MCF 10A (cell line): ENCODE measurements at regions of chr16 and their contacts with region 1.

Region 1: GRCh38 chr16:31117391-31118197 is at the start of gene KAT8:
- DNase-seq: peak; percentile 99
- H3K4me3 Mint-ChIP-seq: peak within 1 kb of the TSS; percentile 74
- H3K27ac Mint-ChIP-seq: peak within 1 kb of the TSS; percentile 94
- H3K4me1 Mint-ChIP-seq: peaks cover 16% of the 10 kb centered on the region
- H3K27me3 Mint-ChIP-seq: no peaks in the 10 kb centered on the region
- CTCF ChIP-seq: no peak
- total RNA-seq, gene KAT8: 42.0 and 45.8 TPM in 2 replicates

Region 2: DNA sequence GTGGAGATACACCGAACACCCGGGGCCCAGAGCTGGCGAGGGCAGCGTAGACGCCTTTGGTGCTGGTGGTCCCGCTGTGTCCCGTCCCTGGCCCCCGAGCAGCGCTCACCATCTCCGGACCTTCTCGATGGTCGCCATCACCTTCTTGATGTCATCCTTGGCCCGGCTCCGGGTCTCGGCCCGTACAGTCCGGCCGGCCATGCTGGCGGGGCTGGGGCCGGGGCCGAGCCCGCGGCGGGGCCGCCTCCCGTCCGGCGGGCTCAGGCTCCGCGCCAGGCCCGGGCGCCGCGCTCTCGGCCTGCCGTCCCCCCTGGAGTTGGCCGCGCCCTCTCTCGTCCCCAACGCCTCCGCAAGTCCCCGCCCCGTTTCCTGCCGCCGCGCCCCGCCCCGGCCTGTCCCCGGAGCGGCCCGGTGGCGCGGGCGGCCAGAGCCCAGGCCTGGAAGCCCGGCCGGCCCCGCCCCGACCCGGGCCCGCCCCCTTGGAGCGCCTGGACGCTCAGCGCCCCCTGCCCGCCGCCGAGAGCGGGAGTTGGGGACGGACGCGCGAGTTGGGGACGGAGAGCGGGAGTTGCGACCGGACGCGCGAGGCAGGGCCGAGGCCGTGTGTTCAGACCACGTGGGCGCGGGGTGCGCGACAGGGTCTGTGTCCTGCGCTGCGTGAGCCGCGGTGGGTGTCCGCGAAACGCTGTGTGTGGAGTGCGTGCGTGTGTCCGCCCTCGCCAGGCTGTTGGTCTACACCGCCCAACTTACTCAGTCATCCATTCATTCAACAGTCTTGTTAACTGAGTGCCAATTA is 223.7 kb before region 1 on chr16 and contains the start of gene BCL7C:
- CTCF ChIA-PET with region 1: no interaction called
- POLR2A ChIA-PET with region 1: no interaction called
- intact Hi-C with region 1: no loop called
- DNase-seq: peak; percentile 88
- H3K4me3 Mint-ChIP-seq: peak within 1 kb of the TSS; percentile 75
- H3K27ac Mint-ChIP-seq: peak within 1 kb of the TSS; percentile 80
- H3K4me1 Mint-ChIP-seq: peaks cover 31% of the 10 kb centered on the region
- H3K27me3 Mint-ChIP-seq: no peaks in the 10 kb centered on the region
- CTCF ChIP-seq: peak; percentile 43
- total RNA-seq, gene BCL7C: 32.0 and 33.9 TPM in 2 replicates

Region 3: GRCh38 chr16:30948667-30949649 is 168.6 kb before region 1 on chr16 and contains the start of gene ORAI3:
- CTCF ChIA-PET with region 1: interaction called, 5 read pairs
- POLR2A ChIA-PET with region 1: interaction called, 13 read pairs
- intact Hi-C with region 1: no loop called
- DNase-seq: peak; percentile 70
- H3K4me3 Mint-ChIP-seq: peak within 1 kb of the TSS; percentile 94
- H3K27ac Mint-ChIP-seq: peak within 1 kb of the TSS; percentile 87
- H3K4me1 Mint-ChIP-seq: no peaks in the 10 kb centered on the region
- H3K27me3 Mint-ChIP-seq: no peaks in the 10 kb centered on the region
- CTCF ChIP-seq: no peak
- total RNA-seq, gene ORAI3: 16.2 and 21.2 TPM in 2 replicates

Region 4: DNA sequence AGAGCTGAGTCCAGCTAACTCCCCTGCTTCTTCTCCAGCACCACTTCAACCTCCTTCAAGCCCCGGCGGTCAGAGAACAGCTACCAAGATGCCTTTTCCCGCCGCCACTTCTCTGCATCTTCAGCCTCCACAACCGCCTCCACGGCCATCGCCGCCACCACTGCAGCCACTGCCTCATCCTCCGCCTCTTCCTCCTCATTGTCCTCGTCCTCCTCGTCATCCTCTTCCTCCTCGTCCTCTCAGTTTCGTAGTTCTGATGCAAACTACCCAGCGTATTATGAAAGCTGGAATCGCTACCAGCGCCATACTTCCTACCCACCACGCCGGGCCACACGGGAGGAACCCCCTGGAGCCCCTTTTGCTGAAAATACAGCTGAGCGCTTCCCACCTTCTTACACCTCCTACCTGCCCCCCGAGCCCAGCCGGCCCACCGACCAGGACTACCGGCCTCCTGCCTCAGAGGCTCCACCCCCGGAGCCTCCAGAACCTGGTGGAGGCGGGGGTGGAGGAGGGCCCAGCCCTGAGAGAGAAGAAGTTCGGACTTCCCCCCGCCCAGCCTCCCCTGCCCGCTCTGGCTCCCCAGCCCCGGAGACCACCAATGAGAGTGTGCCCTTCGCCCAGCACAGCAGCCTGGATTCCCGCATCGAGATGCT is 152.9 kb before region 1 on chr16:
- CTCF ChIA-PET with region 1: no interaction called
- POLR2A ChIA-PET with region 1: no interaction called
- intact Hi-C with region 1: no loop called
- DNase-seq: no peak
- H3K4me3 Mint-ChIP-seq: no peak overlapping the region
- H3K27ac Mint-ChIP-seq: no peak overlapping the region
- H3K4me1 Mint-ChIP-seq: peaks cover 5% of the 10 kb centered on the region
- H3K27me3 Mint-ChIP-seq: no peaks in the 10 kb centered on the region
- CTCF ChIP-seq: no peak

Region 5: DNA sequence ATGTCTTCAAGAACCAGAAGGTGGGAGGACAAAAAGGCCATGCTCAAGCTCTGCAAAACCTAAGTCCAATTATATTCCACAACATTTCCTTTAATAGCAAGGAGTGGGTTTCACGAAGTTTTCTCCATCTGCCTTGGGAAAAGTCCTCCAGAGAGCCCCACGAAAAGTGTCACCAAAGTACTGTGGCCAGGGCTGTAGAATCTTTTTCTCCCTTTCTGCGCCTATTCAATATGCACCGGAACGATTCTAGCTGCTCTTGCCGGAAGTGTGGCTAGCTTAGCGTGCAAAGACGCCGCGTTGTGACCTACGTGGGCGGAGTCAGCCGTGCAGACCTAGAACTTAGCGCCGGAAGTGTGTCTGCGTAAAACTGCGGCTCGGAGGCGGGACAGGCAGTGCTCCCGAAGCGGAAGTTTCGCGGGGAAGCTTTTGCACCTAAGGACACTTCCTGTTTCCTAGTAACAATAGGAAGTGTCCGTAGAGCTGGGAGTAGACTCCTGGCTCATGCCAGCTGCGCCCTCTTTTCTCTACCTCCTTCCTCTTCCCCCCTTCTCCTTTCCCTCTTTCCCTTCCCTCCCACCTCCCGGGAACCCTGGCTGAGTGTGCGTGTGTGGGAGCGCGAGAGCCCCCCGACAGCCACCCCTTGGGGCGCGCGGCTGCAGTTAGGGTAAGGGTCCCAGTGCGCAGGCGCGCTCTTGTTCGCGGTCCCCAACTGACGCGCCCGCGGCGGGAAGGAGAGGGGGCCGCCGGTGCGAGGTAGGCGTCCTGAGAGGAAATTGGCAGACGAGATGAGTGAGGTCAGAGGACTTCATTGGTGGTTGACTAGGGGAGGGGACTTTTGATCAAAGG is 43.4 kb before region 1 on chr16 and contains the starts of genes ZNF646 and ZNF668:
- CTCF ChIA-PET with region 1: no interaction called
- POLR2A ChIA-PET with region 1: interaction called, 54 read pairs
- intact Hi-C with region 1: no loop called
- DNase-seq: peak; percentile 98
- H3K4me3 Mint-ChIP-seq: peak within 1 kb of the TSS; percentile 97
- H3K27ac Mint-ChIP-seq: peak within 1 kb of the TSS; percentile 97
- H3K4me1 Mint-ChIP-seq: peaks cover 24% of the 10 kb centered on the region
- H3K27me3 Mint-ChIP-seq: no peaks in the 10 kb centered on the region
- CTCF ChIP-seq: no peak
- total RNA-seq, gene ZNF646: 12.6 and 15.2 TPM in 2 replicates
- total RNA-seq, gene ZNF668: 11.9 and 15.1 TPM in 2 replicates

Region 6: DNA sequence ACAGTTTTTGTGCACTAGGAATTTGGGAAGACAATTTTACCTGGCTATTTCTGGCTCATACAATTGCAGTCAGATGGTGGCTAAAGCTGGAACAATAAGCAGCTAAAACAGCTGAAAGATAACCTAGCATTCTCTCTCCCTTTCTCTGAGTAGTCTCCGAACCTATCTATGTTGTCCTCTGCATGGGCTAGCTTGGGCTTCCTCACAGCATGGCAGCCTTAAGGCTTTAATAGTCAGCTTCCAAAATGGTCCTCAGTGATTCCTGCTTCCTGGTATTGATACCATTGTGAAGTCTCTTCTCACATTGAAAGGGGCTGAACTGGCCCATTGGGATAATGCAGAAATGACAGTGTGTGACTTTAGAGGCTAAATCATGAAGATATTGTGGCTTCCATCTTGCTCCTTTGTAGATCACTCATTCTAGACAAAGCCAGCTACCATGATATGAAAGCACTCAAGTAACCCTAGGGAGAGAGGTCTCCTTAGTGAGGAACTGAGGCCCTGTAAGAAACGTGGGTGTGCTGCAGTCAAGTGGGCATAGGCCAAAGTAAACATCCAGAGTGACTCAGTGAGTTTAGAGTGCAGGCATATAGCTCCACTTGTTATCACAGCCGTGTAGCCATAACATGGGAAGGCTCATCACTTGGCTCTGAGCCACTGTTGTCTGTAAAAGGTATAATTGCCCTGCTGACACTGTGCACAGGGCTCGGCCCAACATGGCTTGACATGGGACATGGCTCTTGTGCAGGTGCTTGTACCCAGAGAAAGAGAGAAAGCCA is 17.5 kb before region 1 on chr16:
- CTCF ChIA-PET with region 1: interaction called, 3 read pairs
- POLR2A ChIA-PET with region 1: interaction called, 44 read pairs
- intact Hi-C with region 1: no loop called
- DNase-seq: peak; percentile 52
- H3K4me3 Mint-ChIP-seq: no peak overlapping the region
- H3K27ac Mint-ChIP-seq: no peak overlapping the region
- H3K4me1 Mint-ChIP-seq: peaks cover 11% of the 10 kb centered on the region
- H3K27me3 Mint-ChIP-seq: no peaks in the 10 kb centered on the region
- CTCF ChIP-seq: no peak

Region 7: GRCh38 chr16:31142109-31143010 is 24.8 kb after region 1 on chr16:
- CTCF ChIA-PET with region 1: interaction called, 29 read pairs
- POLR2A ChIA-PET with region 1: interaction called, 201 read pairs
- intact Hi-C with region 1: no loop called
- DNase-seq: peak; percentile 99
- H3K4me3 Mint-ChIP-seq: peak overlapping the region; percentile 71
- H3K27ac Mint-ChIP-seq: peak overlapping the region; percentile 91
- H3K4me1 Mint-ChIP-seq: peaks cover 21% of the 10 kb centered on the region
- H3K27me3 Mint-ChIP-seq: no peaks in the 10 kb centered on the region
- CTCF ChIP-seq: peak; percentile 90

Region 8: GRCh38 chr16:31377210-31377903 is 259.8 kb after region 1 on chr16:
- CTCF ChIA-PET with region 1: no interaction called
- POLR2A ChIA-PET with region 1: no interaction called
- intact Hi-C with region 1: no loop called
- DNase-seq: no peak
- H3K4me3 Mint-ChIP-seq: no peak overlapping the region
- H3K27ac Mint-ChIP-seq: no peak overlapping the region
- H3K4me1 Mint-ChIP-seq: no peaks in the 10 kb centered on the region
- H3K27me3 Mint-ChIP-seq: peaks cover 27% of the 10 kb centered on the region
- CTCF ChIP-seq: no peak